Activated T-helper 2 cell treated with anti-CD3 and anti-CD28 coated beads, Interferon-gamma antibody, Interleukin-2, Interleukin-4, amounts not matched to agents 10 μg/mL and 5 μg/mL and 100 μg/mL, durations not matched to agents 14 hours and 24 hours and 36 hours (primary cell): ENCODE measurements at regions of chr20 and their contacts with region 1.

Region 1: DNA sequence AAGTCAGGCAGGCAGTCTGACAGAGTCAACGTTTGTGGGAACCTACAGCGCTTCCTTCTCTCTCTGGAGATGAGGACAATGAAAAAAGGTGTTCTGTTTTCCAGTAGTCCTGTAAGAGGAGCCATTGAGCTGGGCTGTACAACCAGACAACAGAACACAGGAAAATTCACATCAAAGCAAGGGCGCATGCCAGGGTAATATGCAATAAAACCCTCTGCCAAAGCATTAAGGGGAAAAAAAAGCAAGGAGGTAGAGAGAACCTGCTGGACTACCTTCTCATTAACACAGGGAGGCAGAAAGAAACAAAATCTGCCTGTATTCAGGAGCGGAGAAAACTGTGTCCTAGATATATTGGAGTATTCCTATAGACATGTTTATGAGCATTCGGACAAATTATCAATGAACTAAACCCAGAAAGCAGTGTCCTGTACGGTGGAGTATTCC is 1.3 kb downstream of the RNF24 start:
- DNase-seq: no peak
- H3K4me3 Mint-ChIP-seq: peak overlapping the region; percentile 82
- H3K27ac Mint-ChIP-seq: peak overlapping the region; percentile 66
- H3K4me1 Mint-ChIP-seq: peaks cover 49% of the 10 kb centered on the region
- H3K27me3 Mint-ChIP-seq: no peaks in the 10 kb centered on the region

Region 2: GRCh38 chr20:3572151-3572550 is 441.9 kb before region 1 on chr20:
- intact Hi-C with region 1: no loop called
- DNase-seq: no peak
- H3K4me3 Mint-ChIP-seq: no peak overlapping the region
- H3K27ac Mint-ChIP-seq: no peak overlapping the region
- H3K4me1 Mint-ChIP-seq: no peaks in the 10 kb centered on the region
- H3K27me3 Mint-ChIP-seq: no peaks in the 10 kb centered on the region

Region 3: GRCh38 chr20:3595541-3595940 is 418.5 kb before region 1 on chr20:
- intact Hi-C with region 1: no loop called
- DNase-seq: no peak
- H3K4me3 Mint-ChIP-seq: no peak overlapping the region
- H3K27ac Mint-ChIP-seq: no peak overlapping the region
- H3K4me1 Mint-ChIP-seq: peaks cover 2% of the 10 kb centered on the region
- H3K27me3 Mint-ChIP-seq: no peaks in the 10 kb centered on the region

Region 4: GRCh38 chr20:3888622-3889488 is 125.2 kb before region 1 on chr20 and contains the start of gene PANK2:
- intact Hi-C with region 1: loop called (anchors 1 kb)
- DNase-seq: peak; percentile 98
- H3K4me3 Mint-ChIP-seq: peak within 1 kb of the TSS; percentile 99
- H3K27ac Mint-ChIP-seq: peak within 1 kb of the TSS; percentile 93
- H3K4me1 Mint-ChIP-seq: peaks cover 37% of the 10 kb centered on the region
- H3K27me3 Mint-ChIP-seq: no peaks in the 10 kb centered on the region
- total RNA-seq, gene PANK2: 49.2 and 51.4 TPM in 2 replicates

Region 5: GRCh38 chr20:3980260-3981131 is 33.6 kb before region 1 on chr20:
- intact Hi-C with region 1: loop called (anchors 5 kb)
- DNase-seq: peak; percentile 18
- H3K4me3 Mint-ChIP-seq: peak overlapping the region; percentile 72
- H3K27ac Mint-ChIP-seq: peak overlapping the region; percentile 94
- H3K4me1 Mint-ChIP-seq: peaks cover 26% of the 10 kb centered on the region
- H3K27me3 Mint-ChIP-seq: no peaks in the 10 kb centered on the region

Region 6: DNA sequence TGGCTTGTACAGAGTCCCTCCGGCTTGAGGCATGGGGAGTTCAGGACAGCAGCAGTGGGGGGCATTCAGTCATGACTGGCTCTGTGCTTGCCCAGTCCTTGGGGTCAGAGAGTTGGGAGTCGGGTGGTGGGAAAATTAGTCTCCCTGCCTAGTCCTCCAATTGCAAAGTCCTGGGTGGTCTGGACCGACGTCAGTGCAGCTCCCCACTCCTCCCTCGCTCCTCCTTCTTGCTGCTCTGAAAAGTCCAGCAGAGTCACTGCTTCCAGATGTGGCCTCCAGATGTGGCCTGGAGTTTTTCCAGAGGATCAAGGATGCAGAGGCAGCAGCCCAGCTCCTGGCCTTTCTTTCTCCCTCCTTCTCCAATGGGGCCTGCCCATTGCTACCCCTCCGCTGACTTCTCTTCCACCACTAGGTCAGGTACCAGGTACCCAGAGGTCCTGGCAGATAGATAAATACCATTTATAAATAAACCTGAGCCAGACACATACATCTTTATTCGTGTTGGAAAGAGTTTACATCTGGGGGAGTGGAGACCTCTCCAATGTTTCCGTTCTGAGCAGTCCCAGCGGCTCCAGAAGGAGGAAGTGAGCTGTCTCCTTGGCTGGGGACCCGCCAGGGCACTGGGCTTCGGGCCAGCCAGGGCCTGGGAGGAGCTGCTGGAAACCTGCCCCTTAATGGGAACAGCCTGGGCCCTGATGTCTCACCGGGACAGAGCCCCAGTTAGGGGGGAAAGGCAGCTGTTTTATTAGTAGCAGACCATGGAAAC is 50.3 kb after region 1 on chr20:
- intact Hi-C with region 1: no loop called
- DNase-seq: no peak
- H3K4me3 Mint-ChIP-seq: no peak overlapping the region
- H3K27ac Mint-ChIP-seq: no peak overlapping the region
- H3K4me1 Mint-ChIP-seq: peaks cover 68% of the 10 kb centered on the region
- H3K27me3 Mint-ChIP-seq: no peaks in the 10 kb centered on the region

Region 7: DNA sequence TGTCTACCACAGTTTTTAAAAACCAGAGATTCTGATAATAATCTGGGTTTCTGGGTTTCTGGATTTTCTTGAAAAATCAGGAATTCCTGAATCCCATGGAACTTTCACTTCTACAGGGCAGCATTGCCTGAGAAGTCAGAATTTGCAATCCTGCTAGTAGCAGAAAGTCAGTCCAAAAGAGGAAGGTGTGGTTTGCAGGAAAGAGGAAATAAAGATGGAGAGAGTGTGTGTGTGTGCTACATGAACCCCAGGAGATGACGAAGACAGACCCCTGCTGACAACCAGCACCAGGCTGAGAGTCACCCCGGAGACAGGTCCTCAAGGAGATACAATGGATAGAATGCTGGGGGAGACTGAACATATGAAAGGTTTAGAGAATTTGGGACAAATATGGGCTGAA is 752.6 kb after region 1 on chr20:
- intact Hi-C with region 1: no loop called
- DNase-seq: no peak
- H3K4me3 Mint-ChIP-seq: no peak overlapping the region
- H3K27ac Mint-ChIP-seq: no peak overlapping the region
- H3K4me1 Mint-ChIP-seq: peaks cover 4% of the 10 kb centered on the region
- H3K27me3 Mint-ChIP-seq: peaks cover 13% of the 10 kb centered on the region